ENCODE measurements at regions of chr5 and their contacts with region 1.

Region 1: GRCh38 chr5:7518947-7519560 is 123.1 kb downstream of the ADCY2 start:
- DNase-seq: peak; percentile 21 to 73
- H3K4me3 ChIP-seq: no peak overlapping the region
- H3K27ac ChIP-seq: no peak overlapping the region
- H3K4me1 ChIP-seq: peaks cover 1 to 10% (median 7%) of the 10 kb centered on the region in 4 experiments; a peak in 5 of 7 replicates
- H3K27me3 ChIP-seq: no peaks in the 10 kb centered on the region
- CTCF ChIP-seq: peak; percentile 77 to 91 (median 84)
- EP300 ChIP-seq: no peak
- POLR2A ChIP-seq: no peak
- RAD21 ChIP-seq: peak; percentile 90 to 91

Region 2: GRCh38 chr5:7494481-7495130 is 24.4 kb before region 1 on chr5:
- CTCF ChIA-PET with region 1: interaction called, 12 read pairs
- POLR2A ChIA-PET with region 1: no interaction called
- DNase-seq: no peak
- H3K4me3 ChIP-seq: no peak overlapping the region
- H3K27ac ChIP-seq: no peak overlapping the region
- H3K4me1 ChIP-seq: peaks cover 3 to 18% (median 13%) of the 10 kb centered on the region in 4 experiments
- H3K27me3 ChIP-seq: no peaks in the 10 kb centered on the region
- CTCF ChIP-seq: no peak
- EP300 ChIP-seq: no peak
- POLR2A ChIP-seq: no peak
- RAD21 ChIP-seq: no peak

Region 3: DNA sequence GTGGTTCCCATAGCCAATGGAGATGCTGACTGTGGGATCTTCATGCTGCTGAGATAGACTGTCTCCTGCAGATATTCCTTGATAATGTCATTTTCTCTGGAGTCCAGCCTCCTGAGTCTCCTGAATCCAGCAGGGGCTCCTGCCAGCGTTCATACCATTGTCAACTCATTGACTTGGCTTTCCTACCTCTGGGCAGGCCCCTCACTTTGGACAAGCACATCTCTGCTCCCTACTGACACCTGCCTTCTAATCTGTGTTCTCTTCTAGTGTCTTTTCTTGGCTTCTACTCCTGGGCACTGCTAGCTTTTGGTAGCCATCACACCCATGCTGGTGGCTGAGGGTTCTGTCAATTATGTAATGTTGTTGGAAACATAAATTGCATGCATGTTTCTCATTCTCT is 14.9 kb after region 1 on chr5:
- CTCF ChIA-PET with region 1: interaction called, 13 read pairs
- POLR2A ChIA-PET with region 1: interaction called, 4 read pairs
- DNase-seq: no peak
- H3K4me3 ChIP-seq: no peak overlapping the region
- H3K27ac ChIP-seq: no peak overlapping the region
- H3K4me1 ChIP-seq: no peaks in the 10 kb centered on the region
- H3K27me3 ChIP-seq: no peaks in the 10 kb centered on the region
- CTCF ChIP-seq: peak in 1 of 3 experiments; percentile 23; a peak in 1 of 4 replicates
- EP300 ChIP-seq: no peak
- POLR2A ChIP-seq: no peak
- RAD21 ChIP-seq: 0 out of 4 replicates have a peak, but pooled peaks of 1 of the 2 experiments have one; percentile 17

Region 4: DNA sequence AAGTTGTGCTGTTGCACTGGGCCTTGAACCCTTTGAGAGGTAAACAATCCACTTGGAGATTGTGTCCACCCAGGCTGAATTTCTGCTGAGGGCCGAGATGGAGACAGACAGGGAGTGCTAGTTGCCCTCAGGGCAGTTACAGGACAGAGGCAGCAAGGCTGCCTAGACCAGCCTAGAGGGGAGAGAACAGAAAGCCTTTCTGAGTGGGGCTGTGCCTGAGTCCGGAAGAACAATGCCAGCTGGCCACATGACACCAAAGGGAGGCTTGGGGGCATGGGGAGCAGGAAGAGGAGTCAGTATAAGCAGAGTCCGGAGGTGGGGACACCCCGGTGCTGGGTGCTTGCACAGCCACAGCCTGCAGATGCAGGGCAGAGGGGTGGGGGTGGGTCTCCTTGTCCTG is 186.2 kb after region 1 on chr5:
- CTCF ChIA-PET with region 1: no interaction called
- POLR2A ChIA-PET with region 1: no interaction called
- DNase-seq: no peak
- H3K4me3 ChIP-seq: no peak overlapping the region
- H3K27ac ChIP-seq: no peak overlapping the region
- H3K4me1 ChIP-seq: peaks cover 0 to 5% (median 4%) of the 10 kb centered on the region in 4 experiments; a peak in 2 of 7 replicates
- H3K27me3 ChIP-seq: no peaks in the 10 kb centered on the region
- CTCF ChIP-seq: no peak
- EP300 ChIP-seq: no peak
- POLR2A ChIP-seq: no peak
- RAD21 ChIP-seq: no peak